Endothelial cell of umbilical vein (primary cell): ENCODE measurements at regions of chr1 and their contacts with region 1.

Region 1: DNA sequence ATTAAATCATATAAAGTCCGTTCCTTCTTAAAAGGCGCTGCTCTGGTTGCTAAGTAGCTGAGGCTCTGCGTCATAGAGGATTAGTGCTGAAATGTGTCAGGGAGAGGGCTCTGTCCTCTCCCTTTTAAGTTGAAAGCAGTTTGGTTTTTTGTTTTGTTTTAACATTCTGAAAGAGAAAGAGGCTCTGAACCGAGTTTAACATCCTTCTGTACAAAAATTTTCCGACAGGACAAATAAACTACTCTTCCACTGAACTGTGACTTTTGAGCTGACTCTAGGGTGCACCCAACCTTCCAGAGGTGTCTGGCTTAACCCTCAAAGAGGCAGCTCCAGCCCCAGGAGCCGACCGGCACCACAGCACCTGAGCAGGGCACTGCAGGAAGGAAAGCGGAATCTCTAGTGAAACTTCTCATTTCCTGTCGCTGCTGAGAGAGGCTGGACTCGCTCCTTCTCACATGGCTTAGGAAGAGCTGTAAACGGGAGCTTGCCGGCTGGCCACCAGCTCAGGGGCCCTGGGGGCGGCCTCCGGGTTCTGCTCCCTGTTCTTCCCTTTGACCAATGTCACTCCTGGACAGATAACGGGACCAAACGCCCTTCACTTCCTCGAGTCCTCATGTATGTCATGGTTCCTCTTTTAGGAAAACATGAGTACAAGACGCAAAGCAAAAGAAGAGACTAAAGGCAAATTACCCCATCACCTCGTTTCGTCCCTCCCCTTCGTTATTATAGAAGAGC is 1.2 kb downstream of the VAV3 start:
- DNase-seq: peak; percentile 8
- H3K4me3 ChIP-seq: peak overlapping the region in 1 of 3 experiments; percentile 41
- H3K27ac ChIP-seq: no peak overlapping the region
- H3K4me1 ChIP-seq: peaks cover 16% of the 10 kb centered on the region
- H3K27me3 ChIP-seq: peaks cover 25 to 27% of the 10 kb centered on the region in 2 experiments
- CTCF ChIP-seq: no peak
- POLR2A ChIP-seq: no peak

Region 2: GRCh38 chr1:107829061-107830040 is 134.4 kb before region 1 on chr1:
- CTCF ChIA-PET with region 1: no interaction called
- POLR2A ChIA-PET with region 1: no interaction called
- dilution Hi-C with region 1: no loop called
- intact Hi-C with region 1: loop called (anchors 10 kb)
- DNase-seq: peak; percentile 55
- H3K4me3 ChIP-seq: peak overlapping the region in 1 of 3 experiments; percentile 21
- H3K27ac ChIP-seq: peak overlapping the region; percentile 21
- H3K4me1 ChIP-seq: peaks cover 11% of the 10 kb centered on the region
- H3K27me3 ChIP-seq: no peaks in the 10 kb centered on the region
- CTCF ChIP-seq: no peak
- POLR2A ChIP-seq: no peak

Region 3: DNA sequence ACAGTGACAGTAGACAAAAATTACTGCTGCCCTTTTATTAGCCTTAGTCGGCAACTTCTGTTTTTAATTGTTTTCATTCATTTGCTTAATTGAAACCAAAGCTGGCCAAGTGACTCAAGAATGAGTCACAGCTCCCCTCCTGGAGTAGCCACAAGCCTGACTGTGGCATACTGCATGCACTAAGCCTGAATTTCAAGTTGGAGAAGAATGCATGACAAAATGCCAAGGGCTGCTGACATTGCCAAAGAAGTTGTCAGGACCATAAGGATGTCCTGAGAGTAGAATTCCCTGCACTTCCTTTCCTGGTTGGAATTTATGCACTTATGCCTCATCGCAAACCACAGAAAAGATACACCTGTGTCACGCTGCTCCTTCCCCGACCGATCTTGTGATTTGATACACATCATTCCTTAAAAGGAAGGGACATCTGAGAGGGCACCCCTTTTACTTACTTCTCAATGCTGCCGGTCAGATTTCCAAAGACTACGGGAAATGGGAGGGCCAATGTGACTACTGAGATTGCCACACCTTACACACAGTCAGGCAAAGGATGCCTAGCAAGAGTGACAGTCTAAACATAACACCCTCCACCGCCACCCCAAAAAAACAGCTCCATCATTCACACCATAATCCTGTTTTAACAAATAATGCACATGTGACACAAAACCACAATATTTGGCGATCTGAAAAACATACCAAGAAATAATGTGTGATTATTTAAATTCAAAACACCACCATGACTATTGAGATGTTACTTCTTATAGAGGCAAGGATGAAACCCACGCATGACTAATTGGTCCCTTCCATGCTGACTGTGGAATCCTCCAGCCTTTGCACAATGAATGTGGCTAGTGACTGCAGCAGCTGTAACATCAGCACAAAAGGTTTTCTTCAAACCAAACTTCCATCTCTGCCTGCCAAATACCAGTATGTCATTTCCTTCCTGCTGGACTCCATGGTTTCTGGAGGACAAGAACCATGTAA is 27.0 kb before region 1 on chr1:
- CTCF ChIA-PET with region 1: no interaction called
- POLR2A ChIA-PET with region 1: no interaction called
- dilution Hi-C with region 1: no loop called
- intact Hi-C with region 1: loop called (anchors 1 kb)
- DNase-seq: peak; percentile 78
- H3K4me3 ChIP-seq: peak overlapping the region in 1 of 3 experiments; percentile 1
- H3K27ac ChIP-seq: peak overlapping the region; percentile 69
- H3K4me1 ChIP-seq: peaks cover 20% of the 10 kb centered on the region
- H3K27me3 ChIP-seq: no peaks in the 10 kb centered on the region
- CTCF ChIP-seq: no peak
- POLR2A ChIP-seq: no peak

Region 4: DNA sequence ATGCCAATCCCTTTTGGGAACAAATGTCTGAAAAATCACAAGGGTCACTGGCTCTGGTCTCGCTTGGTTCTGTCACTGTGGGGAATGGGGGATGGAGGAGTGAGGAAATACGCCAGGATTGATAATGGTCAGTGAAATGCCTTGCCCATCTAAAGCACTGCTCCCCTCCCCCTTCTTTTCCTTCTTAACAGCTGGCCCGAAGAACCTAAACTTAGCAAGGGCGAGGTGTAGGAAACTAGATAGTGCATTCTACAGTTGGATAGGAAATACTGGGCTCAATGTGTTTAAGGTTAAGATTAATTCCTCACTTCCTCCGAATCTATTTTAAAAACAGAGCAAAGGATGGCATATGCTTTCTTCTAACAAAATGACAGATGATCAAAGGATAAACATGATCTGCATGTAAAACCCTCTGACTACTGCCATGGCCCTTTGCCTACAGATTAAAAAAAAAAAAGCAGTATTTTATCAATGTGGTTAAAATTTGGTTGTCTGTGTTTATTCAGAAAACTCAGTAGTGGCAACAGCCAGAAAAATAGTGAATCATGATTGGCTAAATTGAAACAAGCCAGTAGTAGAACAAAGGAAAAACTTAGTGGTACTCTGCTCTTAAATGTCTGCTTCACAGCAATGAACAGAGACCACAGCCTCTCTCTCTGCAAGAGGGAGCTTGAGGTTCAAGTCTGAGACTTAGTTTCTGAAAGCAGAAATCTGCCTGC is 87.3 kb after region 1 on chr1:
- CTCF ChIA-PET with region 1: no interaction called
- POLR2A ChIA-PET with region 1: no interaction called
- dilution Hi-C with region 1: no loop called
- intact Hi-C with region 1: loop called (anchors 2 kb)
- DNase-seq: peak; percentile 80
- H3K4me3 ChIP-seq: no peak overlapping the region
- H3K27ac ChIP-seq: peak overlapping the region; percentile 13
- H3K4me1 ChIP-seq: peaks cover 18% of the 10 kb centered on the region
- H3K27me3 ChIP-seq: no peaks in the 10 kb centered on the region
- CTCF ChIP-seq: no peak
- POLR2A ChIP-seq: no peak